Naive thymus-derived CD4-positive, alpha-beta T cell (primary cell): ENCODE measurements at regions of chr6 and their contacts with region 1.

Region 1: DNA sequence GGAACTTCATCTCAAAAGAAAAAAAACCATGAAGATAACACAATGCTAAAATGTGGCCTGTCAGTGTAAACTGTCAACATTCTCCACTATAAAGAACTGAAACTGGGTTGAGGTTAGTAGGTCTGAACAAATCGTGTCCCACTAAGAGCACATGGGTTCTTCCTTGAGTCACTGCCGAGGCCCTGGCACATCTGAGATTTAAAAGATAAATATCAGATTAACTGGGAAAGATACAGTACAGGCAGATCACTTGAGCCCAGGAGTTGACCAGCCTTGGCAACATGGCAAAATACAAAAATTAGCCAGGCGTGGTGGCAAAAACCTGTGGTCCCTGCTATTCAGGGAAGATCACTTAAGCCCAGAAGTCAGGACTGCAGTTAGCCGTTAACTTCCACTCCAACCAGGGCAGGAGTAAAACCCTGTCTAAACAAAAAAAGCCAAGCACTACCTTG is 5.6 kb downstream of the EEF1A1 start:
- DNase-seq: no peak
- ATAC-seq: peak; percentile 5
- H3K4me3 ChIP-seq: no peak overlapping the region
- H3K4me3 Mint-ChIP-seq: peak overlapping the region in 8 of 10 donors; percentile 25 to 84 (median 58)
- H3K27ac ChIP-seq: peak overlapping the region; percentile 15
- H3K27ac Mint-ChIP-seq: peak overlapping the region; percentile 3 to 89 (median 66)
- H3K4me1 ChIP-seq: peaks cover 35 to 48% of the 10 kb centered on the region in 2 donors
- H3K4me1 Mint-ChIP-seq: peaks cover 17 to 59% (median 46%) of the 10 kb centered on the region in 7 donors
- H3K27me3 ChIP-seq: no peaks in the 10 kb centered on the region
- H3K27me3 Mint-ChIP-seq: peaks cover 0 to 2% (median 0%) of the 10 kb centered on the region in 5 donors

Region 2: GRCh38 chr6:73585566-73586415 is 70.6 kb after region 1 on chr6:
- CTCF ChIA-PET with region 1: interaction called, 18 read pairs
- POLR2A ChIA-PET with region 1: interaction called, 183 read pairs
- intact Hi-C with region 1: loop called in 1 of 2 experiments (anchors 1 kb)
- DNase-seq: peak in 7 of 9 donors; percentile 55 to 76 (median 67)
- ATAC-seq: peak; percentile 82
- H3K4me3 ChIP-seq: peak overlapping the region; percentile 51
- H3K4me3 Mint-ChIP-seq: peak overlapping the region; percentile 78 to 90 (median 86)
- H3K27ac ChIP-seq: peak overlapping the region; percentile 89
- H3K27ac Mint-ChIP-seq: peak overlapping the region; percentile 91 to 100 (median 99)
- H3K4me1 ChIP-seq: peaks cover 6 to 16% of the 10 kb centered on the region in 2 donors
- H3K4me1 Mint-ChIP-seq: peaks cover 22 to 27% (median 24%) of the 10 kb centered on the region in 7 donors
- H3K27me3 ChIP-seq: no peaks in the 10 kb centered on the region
- H3K27me3 Mint-ChIP-seq: no peaks in the 10 kb centered on the region

Region 3: GRCh38 chr6:73675466-73676098 is 160.4 kb after region 1 on chr6:
- CTCF ChIA-PET with region 1: no interaction called
- POLR2A ChIA-PET with region 1: no interaction called
- intact Hi-C with region 1: loop called in 1 of 2 experiments (anchors 1 kb)
- DNase-seq: peak; percentile 31 to 74 (median 59)
- ATAC-seq: peak; percentile 92
- H3K4me3 ChIP-seq: no peak overlapping the region
- H3K4me3 Mint-ChIP-seq: no peak overlapping the region
- H3K27ac ChIP-seq: no peak overlapping the region
- H3K27ac Mint-ChIP-seq: no peak overlapping the region
- H3K4me1 ChIP-seq: no peaks in the 10 kb centered on the region
- H3K4me1 Mint-ChIP-seq: peaks cover 0 to 4% (median 0%) of the 10 kb centered on the region in 7 donors
- H3K27me3 ChIP-seq: no peaks in the 10 kb centered on the region
- H3K27me3 Mint-ChIP-seq: peaks cover 4 to 23% (median 21%) of the 10 kb centered on the region in 5 donors